Activated CD4-positive, alpha-beta memory T cell treated with anti-CD3 and anti-CD28 coated beads for 36 hours (primary cell): ENCODE measurements at regions of chr5 and their contacts with region 1.

Region 1: DNA sequence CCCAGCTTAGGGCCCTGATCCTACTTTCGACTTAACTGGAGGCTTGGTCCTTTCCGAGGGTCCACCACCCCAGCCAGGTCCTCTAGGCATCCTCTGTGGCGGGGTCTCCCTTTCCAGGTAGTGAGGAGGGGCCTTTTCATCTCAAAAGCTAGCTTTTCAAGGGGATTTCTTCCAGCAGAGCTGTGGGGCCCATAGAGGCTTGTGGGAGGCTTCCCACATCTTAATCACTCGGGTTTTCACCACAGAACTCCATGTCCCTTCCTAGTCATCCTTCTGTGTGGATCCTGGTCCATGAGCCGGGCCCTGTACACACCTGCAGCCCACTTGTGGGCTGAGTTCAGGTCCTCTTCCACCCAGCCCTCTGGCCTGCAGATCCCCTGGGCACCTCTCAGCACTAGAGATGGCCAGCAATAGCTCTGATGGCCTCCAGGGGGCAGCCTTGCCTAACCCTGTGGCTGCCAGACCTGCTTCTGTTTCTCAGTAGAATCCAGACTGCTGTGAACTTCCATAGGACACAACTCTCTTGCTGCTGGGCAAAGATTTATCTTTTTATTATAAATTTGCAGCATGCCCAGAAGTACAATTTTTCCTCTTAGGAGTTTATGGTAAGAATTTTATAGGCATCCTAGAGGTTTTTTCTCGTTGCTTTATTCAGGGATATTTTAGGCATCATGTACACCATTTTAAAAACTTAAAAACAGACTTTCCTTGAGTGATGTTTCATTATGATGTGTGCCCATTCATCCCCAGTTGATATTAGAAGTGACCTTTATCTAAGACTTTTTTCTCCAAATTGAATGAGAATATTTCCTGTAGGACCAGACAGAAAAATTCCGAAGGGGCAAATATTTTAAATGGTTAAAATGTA is 208.9 kb downstream of the TRIO start:
- DNase-seq: peak; percentile 69
- H3K4me3 Mint-ChIP-seq: no peak overlapping the region
- H3K27ac Mint-ChIP-seq: no peak overlapping the region
- H3K4me1 Mint-ChIP-seq: no peaks in the 10 kb centered on the region
- H3K27me3 Mint-ChIP-seq: peaks cover 5% of the 10 kb centered on the region

Region 2: DNA sequence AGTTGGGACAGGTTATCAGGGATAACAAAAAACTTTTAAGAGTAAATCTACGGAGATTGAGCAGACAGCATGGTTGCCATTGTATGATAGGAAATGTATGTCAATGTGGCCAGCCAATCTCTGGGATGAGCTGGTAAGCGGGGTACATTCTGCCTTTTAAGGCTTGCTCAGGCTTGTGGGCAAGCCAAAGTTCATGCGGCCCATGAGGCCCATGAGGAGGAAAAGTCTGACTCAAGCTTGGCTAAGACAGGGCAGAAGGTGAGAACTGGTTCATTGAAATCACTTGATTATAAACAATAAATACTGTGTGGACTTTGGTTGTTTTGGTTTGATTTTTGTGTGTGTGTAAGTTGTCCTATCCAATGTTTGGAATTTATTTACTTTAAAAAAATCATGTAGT is 1404.7 kb before region 1 on chr5:
- CTCF ChIA-PET with region 1: no interaction called
- POLR2A ChIA-PET with region 1: no interaction called
- intact Hi-C with region 1: no loop called
- DNase-seq: no peak
- H3K4me3 Mint-ChIP-seq: no peak overlapping the region
- H3K27ac Mint-ChIP-seq: no peak overlapping the region
- H3K4me1 Mint-ChIP-seq: no peaks in the 10 kb centered on the region
- H3K27me3 Mint-ChIP-seq: no peaks in the 10 kb centered on the region

Region 3: DNA sequence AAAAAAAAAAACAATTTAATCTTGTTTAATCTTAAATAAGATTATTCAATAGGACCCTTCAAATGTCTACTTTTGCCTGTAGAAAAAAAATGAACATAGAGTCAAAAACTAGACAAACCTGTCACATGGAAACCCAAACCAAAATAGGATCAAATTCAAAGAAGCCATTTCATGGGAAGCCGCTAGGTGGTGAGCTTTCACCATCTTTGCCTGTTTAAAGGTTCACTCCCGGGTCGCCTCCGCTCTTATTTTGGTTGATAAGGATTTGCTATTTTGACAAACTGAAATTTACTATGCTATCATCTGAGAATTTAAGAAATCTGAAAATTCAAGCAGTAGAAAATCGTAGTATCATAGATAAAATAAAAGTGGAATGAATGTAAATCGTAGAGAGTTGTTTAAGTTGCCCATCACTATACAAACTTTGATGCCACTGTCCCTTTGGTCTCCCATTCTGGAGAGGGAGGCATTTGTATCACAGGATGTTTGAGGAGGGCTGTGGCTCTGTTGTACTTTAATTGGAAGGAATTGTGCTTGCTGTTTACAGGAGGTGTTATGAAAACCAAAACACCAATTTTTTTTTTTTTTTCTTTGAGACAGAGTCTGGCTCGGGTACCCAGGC is 364.1 kb before region 1 on chr5:
- CTCF ChIA-PET with region 1: interaction called, 3 read pairs
- POLR2A ChIA-PET with region 1: no interaction called
- intact Hi-C with region 1: loop called (anchors 5 kb)
- DNase-seq: peak; percentile 43
- H3K4me3 Mint-ChIP-seq: no peak overlapping the region
- H3K27ac Mint-ChIP-seq: no peak overlapping the region
- H3K4me1 Mint-ChIP-seq: no peaks in the 10 kb centered on the region
- H3K27me3 Mint-ChIP-seq: no peaks in the 10 kb centered on the region

Region 4: DNA sequence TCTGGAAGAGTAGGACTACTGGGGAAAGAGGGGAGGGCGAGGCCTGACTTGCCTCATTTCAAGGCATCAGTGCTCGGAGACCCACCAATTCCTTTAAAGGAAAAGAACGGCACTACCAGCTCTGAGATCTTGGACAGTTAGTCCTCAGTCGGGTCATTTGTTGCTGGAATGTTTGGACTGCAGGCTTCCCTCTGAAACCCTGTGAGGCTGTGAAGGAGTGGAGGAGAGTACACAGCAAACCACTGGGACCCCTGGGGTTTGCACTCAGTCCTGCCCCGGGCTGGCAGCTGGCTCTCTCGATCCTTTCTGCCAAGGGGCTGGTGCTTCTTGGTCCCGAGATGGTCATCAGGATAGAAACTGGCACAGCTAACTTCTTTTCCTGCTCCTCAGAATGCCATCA is 14.5 kb before region 1 on chr5:
- CTCF ChIA-PET with region 1: interaction called, 10 read pairs
- POLR2A ChIA-PET with region 1: no interaction called
- intact Hi-C with region 1: no loop called
- DNase-seq: no peak
- H3K4me3 Mint-ChIP-seq: no peak overlapping the region
- H3K27ac Mint-ChIP-seq: no peak overlapping the region
- H3K4me1 Mint-ChIP-seq: no peaks in the 10 kb centered on the region
- H3K27me3 Mint-ChIP-seq: no peaks in the 10 kb centered on the region

Region 5: GRCh38 chr5:14364576-14365472 is 12.7 kb after region 1 on chr5:
- CTCF ChIA-PET with region 1: interaction called, 22 read pairs
- POLR2A ChIA-PET with region 1: no interaction called
- intact Hi-C with region 1: no loop called
- DNase-seq: peak; percentile 19
- H3K4me3 Mint-ChIP-seq: no peak overlapping the region
- H3K27ac Mint-ChIP-seq: no peak overlapping the region
- H3K4me1 Mint-ChIP-seq: peaks cover 18% of the 10 kb centered on the region
- H3K27me3 Mint-ChIP-seq: no peaks in the 10 kb centered on the region

Region 6: DNA sequence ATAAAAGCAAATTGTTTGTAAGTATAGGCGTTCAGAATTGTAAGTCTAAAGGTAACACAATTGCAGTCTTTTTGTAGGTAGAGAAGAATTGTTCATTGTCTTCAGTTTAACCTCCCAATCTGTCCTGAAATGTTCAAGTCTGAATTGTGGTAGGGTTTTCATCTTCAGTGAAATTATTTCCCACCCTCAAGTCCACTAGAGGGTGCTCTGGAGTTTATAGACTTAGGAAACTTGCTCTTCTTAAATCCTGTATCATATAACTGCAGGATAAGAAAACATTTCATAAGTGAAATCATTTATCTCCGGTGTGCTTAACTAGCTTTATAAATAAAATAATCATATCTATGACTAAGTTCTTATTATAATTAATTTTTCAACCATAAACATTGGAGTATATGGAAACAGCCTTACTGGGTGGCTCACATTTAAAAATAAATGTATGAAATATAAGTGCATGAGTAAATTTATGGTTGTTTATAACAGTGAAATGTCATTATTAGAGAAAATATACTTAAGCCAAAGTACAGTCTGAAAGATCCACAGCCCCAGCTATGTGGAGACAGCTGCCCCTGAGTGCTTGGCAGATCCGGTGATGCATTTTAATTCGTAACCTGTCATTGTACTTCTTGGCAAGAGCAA is 47.1 kb after region 1 on chr5:
- CTCF ChIA-PET with region 1: interaction called, 6 read pairs
- POLR2A ChIA-PET with region 1: no interaction called
- intact Hi-C with region 1: loop called (anchors 2 kb)
- DNase-seq: no peak
- H3K4me3 Mint-ChIP-seq: no peak overlapping the region
- H3K27ac Mint-ChIP-seq: no peak overlapping the region
- H3K4me1 Mint-ChIP-seq: peaks cover 13% of the 10 kb centered on the region
- H3K27me3 Mint-ChIP-seq: no peaks in the 10 kb centered on the region

Region 7: DNA sequence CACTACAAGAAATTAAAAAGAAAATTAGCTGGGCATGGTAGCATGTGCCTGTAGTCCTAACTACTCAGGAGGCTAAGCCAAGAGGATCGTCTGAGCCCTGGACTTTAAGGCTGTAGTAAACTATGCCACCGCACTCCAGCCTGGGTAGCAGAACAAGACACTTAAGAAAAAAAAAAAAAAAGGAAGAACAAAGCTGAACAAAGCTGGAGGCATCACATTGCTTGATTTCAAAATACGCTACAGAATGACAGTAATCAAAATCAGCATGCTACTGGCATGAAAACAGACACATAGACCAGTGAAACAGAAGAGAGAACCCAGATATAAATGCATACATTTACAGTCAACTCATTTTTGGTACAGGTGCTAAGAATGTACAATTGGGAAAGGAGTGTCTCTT is 298.0 kb after region 1 on chr5:
- CTCF ChIA-PET with region 1: interaction called, 59 read pairs
- POLR2A ChIA-PET with region 1: no interaction called
- intact Hi-C with region 1: loop called (anchors 1 kb)
- DNase-seq: no peak
- H3K4me3 Mint-ChIP-seq: no peak overlapping the region
- H3K27ac Mint-ChIP-seq: no peak overlapping the region
- H3K4me1 Mint-ChIP-seq: no peaks in the 10 kb centered on the region
- H3K27me3 Mint-ChIP-seq: peaks cover 9% of the 10 kb centered on the region

Region 8: DNA sequence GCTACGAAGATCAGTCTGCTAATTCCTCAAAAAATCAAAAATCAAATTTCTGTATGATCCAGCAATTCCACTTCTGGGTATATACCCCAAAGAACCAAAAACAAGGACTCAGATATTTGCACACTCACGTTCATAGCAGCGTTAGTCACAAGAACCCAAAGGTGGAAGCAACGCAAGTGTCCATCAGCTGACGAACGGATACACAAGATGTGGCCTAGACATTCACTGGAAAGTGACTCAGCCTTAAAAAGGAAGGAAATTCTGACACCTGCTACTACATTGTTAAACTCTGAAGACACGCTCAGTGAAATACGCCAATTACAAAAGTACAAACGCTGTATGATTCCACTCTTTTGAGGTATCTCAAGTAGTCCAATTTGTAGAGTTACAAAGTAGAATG is 405.8 kb after region 1 on chr5:
- CTCF ChIA-PET with region 1: no interaction called
- POLR2A ChIA-PET with region 1: no interaction called
- intact Hi-C with region 1: no loop called
- DNase-seq: no peak
- H3K4me3 Mint-ChIP-seq: no peak overlapping the region
- H3K27ac Mint-ChIP-seq: no peak overlapping the region
- H3K4me1 Mint-ChIP-seq: no peaks in the 10 kb centered on the region
- H3K27me3 Mint-ChIP-seq: no peaks in the 10 kb centered on the region

Region 9: GRCh38 chr5:15013654-15014463 is 661.8 kb after region 1 on chr5:
- CTCF ChIA-PET with region 1: interaction called, 3 read pairs
- POLR2A ChIA-PET with region 1: no interaction called
- intact Hi-C with region 1: loop called (anchors 5 kb)
- DNase-seq: no peak
- H3K4me3 Mint-ChIP-seq: no peak overlapping the region
- H3K27ac Mint-ChIP-seq: no peak overlapping the region
- H3K4me1 Mint-ChIP-seq: no peaks in the 10 kb centered on the region
- H3K27me3 Mint-ChIP-seq: no peaks in the 10 kb centered on the region